ENCODE measurements at regions of chr20 and their contacts with region 1.

Region 1: GRCh38 chr20:63495741-63496595 is 2.9 kb downstream of the EEF1A2 start:
- DNase-seq: peak; percentile 73
- H3K4me3 ChIP-seq: no peak overlapping the region
- H3K27ac ChIP-seq: no peak overlapping the region
- H3K4me1 ChIP-seq: no peaks in the 10 kb centered on the region
- CTCF ChIP-seq: peak; percentile 92

Region 2: DNA sequence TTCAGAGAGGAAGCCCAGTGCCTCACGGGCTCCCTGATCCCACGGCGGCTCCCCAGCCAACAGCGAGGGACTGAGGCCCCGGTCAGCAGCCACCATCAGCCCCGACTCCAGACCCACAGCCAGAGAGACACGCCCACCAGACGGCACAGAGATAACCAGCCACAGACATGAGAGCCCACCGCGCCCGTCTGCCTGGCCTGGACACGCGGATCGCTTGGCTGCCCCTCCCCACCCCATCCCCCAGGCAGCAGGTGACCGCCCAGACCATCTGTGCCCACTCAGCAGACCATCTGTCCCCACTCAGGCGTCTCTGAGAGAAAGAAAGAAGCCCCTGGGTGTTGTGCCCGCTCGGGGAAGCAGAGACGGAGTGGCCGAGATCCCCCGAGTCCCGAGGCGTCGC is 79.3 kb before region 1 on chr20:
- CTCF ChIA-PET with region 1: no interaction called
- POLR2A ChIA-PET with region 1: no interaction called
- intact Hi-C with region 1: no loop called
- DNase-seq: no peak
- H3K4me3 ChIP-seq: no peak overlapping the region
- H3K27ac ChIP-seq: no peak overlapping the region
- H3K4me1 ChIP-seq: no peaks in the 10 kb centered on the region
- CTCF ChIP-seq: no peak

Region 3: DNA sequence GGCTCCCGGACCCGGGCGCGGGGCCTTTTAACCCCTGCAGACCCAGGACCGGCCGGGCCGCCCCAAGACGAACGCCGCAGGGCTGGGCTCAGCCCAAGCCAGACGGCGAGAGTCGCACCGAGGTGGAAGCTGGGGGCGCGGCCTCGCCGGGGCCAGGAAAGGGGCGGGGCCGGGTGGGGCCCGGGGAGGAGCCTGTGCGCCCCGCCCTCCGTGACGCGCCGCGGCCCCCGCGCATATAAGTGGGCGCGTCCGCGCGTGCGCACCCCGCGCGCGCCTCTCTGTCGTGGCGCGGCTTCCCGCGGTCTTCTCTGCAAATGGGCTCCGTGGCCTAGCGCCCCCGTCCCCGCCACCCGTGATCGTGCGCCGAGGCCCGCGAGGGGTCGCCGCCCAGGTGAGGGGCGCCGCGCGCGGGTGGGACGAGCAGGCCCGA is 24.6 kb after region 1 on chr20 and contains the start of gene PPDPF:
- CTCF ChIA-PET with region 1: no interaction called
- POLR2A ChIA-PET with region 1: interaction called, 4 read pairs
- intact Hi-C with region 1: loop called (anchors 2 kb)
- DNase-seq: peak; percentile 86
- H3K4me3 ChIP-seq: peak within 1 kb of the TSS; percentile 95
- H3K27ac ChIP-seq: peak within 1 kb of the TSS; percentile 22
- H3K4me1 ChIP-seq: peaks cover 11% of the 10 kb centered on the region
- CTCF ChIP-seq: no peak
- total RNA-seq, gene PPDPF: 16.5 and 34.9 TPM in 2 replicates

Region 4: GRCh38 chr20:63568170-63568981 is 72.4 kb after region 1 on chr20:
- CTCF ChIA-PET with region 1: interaction called, 16 read pairs
- POLR2A ChIA-PET with region 1: no interaction called
- intact Hi-C with region 1: no loop called
- DNase-seq: no peak
- H3K4me3 ChIP-seq: no peak overlapping the region
- H3K27ac ChIP-seq: no peak overlapping the region
- H3K4me1 ChIP-seq: peaks cover 12% of the 10 kb centered on the region
- CTCF ChIP-seq: no peak

Region 5: GRCh38 chr20:63578224-63579016 is 82.5 kb after region 1 on chr20:
- CTCF ChIA-PET with region 1: no interaction called
- POLR2A ChIA-PET with region 1: no interaction called
- intact Hi-C with region 1: loop called (anchors 1 kb)
- DNase-seq: peak; percentile 38
- H3K4me3 ChIP-seq: no peak overlapping the region
- H3K27ac ChIP-seq: no peak overlapping the region
- H3K4me1 ChIP-seq: peaks cover 6% of the 10 kb centered on the region
- CTCF ChIP-seq: peak; percentile 64